Gastrocnemius medialis (tissue), 4 donors: ENCODE measurements at regions of chr2 and their contacts with region 1.

Region 1: DNA sequence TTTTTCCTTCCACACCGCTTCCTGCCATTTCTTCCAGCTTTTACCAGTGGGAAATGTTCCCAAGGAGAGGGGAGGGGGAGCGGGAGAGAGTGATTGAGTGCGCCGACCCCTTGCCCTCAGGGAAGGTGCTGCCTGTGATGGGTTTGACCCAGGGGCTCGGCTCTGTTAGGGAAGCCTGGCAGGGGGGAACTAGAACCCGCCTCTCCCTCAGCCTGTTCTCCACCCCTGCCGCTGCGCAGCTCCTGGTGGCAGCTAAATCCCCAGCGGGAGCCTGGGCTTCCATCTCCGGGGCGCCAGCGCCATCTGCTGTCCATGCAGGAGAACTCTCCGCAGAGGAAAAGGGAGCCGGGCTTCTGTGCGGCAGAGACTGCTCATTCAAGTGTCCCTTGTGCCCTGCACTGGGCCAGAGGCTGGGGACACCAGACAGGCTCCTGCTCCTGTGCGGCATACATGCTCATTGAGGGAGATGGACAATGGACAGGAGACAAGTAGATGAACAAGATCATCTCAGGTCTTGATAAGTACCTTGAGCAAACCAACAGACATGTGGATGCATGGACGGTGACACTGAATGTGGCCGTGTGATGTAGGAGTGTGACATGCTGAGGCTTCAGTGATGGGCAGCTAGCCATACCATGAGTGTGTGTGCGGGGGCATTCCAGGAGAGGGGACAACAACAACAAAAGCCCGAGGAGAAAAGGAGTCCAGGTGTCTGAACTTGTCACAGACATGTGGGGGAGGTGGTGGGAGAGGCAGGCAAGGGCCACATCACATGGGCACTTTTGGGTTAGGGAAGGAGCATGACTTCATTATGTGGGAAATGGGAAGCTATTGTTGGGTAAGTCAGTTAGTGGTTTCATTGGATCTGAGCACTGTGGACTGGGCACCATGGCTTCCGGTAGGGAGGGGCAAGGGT is 13.3 kb downstream of the CHPF start:
- DNase-seq: peak; percentile 74 to 76
- ATAC-seq: peak; percentile 91 to 96
- H3K4me3 ChIP-seq: peak overlapping the region in 1 of 4 donors; percentile 40
- H3K27ac ChIP-seq: no peak overlapping the region
- H3K4me1 ChIP-seq: no peaks in the 10 kb centered on the region
- H3K27me3 ChIP-seq: peaks cover 0 to 2% (median 0%) of the 10 kb centered on the region in 3 donors
- CTCF ChIP-seq: peak; percentile 97 to 99 (median 98)
- POLR2A ChIP-seq: no peak

Region 2: GRCh38 chr2:219171231-219171651 is 359.1 kb before region 1 on chr2:
- in situ Hi-C with region 1: no loop called
- intact Hi-C with region 1: no loop called
- DNase-seq: peak; percentile 80 to 82
- ATAC-seq: peak; percentile 82 to 88
- H3K4me3 ChIP-seq: no peak overlapping the region
- H3K27ac ChIP-seq: peak overlapping the region; percentile 68 to 84 (median 76)
- H3K4me1 ChIP-seq: peaks cover 14 to 19% of the 10 kb centered on the region in 2 donors
- H3K27me3 ChIP-seq: no peaks in the 10 kb centered on the region
- CTCF ChIP-seq: peak; percentile 51 to 78 (median 76)
- POLR2A ChIP-seq: peak; percentile 12 to 24

Region 3: GRCh38 chr2:219314804-219315468 is 215.4 kb before region 1 on chr2:
- in situ Hi-C with region 1: no loop called
- intact Hi-C with region 1: no loop called
- DNase-seq: no peak
- ATAC-seq: no peak
- H3K4me3 ChIP-seq: no peak overlapping the region
- H3K27ac ChIP-seq: no peak overlapping the region
- H3K4me1 ChIP-seq: no peaks in the 10 kb centered on the region
- H3K27me3 ChIP-seq: peaks cover 7 to 22% (median 9%) of the 10 kb centered on the region in 3 donors
- CTCF ChIP-seq: no peak
- POLR2A ChIP-seq: no peak

Region 4: GRCh38 chr2:219362524-219363164 is 167.7 kb before region 1 on chr2:
- in situ Hi-C with region 1: no loop called
- intact Hi-C with region 1: no loop called
- DNase-seq: peak; percentile 90 to 96
- ATAC-seq: peak; percentile 97 to 99
- H3K4me3 ChIP-seq: no peak overlapping the region
- H3K27ac ChIP-seq: peak overlapping the region; percentile 78 to 88 (median 80)
- H3K4me1 ChIP-seq: peaks cover 22 to 24% of the 10 kb centered on the region in 2 donors
- H3K27me3 ChIP-seq: peaks cover 12 to 19% (median 17%) of the 10 kb centered on the region in 3 donors
- CTCF ChIP-seq: no peak
- POLR2A ChIP-seq: no peak

Region 5: DNA sequence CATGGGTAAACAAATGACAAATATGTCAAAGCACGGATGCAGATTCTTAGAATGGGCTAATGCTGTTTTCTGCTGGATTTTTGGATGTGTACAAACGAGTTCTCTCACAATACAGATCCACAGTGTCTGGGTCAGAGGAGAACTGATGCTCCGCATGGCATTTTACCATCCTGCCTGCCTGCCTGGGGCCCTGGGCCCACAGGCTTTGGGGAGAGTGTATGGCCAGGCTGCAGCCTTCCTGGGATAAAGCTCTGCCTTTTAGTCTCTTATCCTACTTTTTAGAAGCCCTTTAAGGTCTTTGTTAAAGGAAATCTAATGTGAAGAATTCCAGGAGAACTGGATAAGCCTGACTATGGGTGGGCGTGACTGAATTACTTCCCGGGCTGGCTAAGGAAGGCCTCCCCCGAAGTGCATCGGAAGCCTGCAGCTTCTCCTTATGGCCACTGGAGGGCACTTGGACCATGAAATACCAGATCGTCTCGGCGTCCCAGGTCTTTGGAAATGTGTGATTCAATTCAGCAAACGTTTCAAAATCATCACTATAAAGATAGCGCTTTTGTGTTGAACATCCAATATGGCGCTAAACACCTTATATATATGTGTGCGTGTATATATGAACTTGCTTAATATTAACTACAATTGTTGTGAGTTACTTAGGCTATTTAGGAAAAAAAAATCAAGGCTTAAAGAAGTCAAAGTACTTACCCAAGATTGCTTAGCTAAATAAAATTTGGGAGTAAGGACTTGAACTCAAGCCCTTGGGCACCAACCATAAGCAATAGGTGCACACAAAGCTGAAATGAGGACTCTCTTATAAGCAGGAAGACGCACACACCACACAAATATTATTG is 127.4 kb before region 1 on chr2:
- in situ Hi-C with region 1: loop called (anchors 5 kb)
- intact Hi-C with region 1: loop called (anchors 1 kb)
- DNase-seq: peak; percentile 61 to 79
- ATAC-seq: peak; percentile 6 to 18
- H3K4me3 ChIP-seq: no peak overlapping the region
- H3K27ac ChIP-seq: peak overlapping the region; percentile 92 to 99 (median 98)
- H3K4me1 ChIP-seq: peaks cover 50 to 83% of the 10 kb centered on the region in 2 donors
- H3K27me3 ChIP-seq: no peaks in the 10 kb centered on the region
- CTCF ChIP-seq: peak; percentile 91 to 94 (median 93)
- POLR2A ChIP-seq: no peak

Region 6: GRCh38 chr2:219475697-219476651 is 54.3 kb before region 1 on chr2:
- in situ Hi-C with region 1: loop called in 2 of 4 experiments (anchors 10 kb)
- intact Hi-C with region 1: loop called (anchors 1 kb)
- DNase-seq: peak; percentile 39 to 64
- ATAC-seq: peak; percentile 62 to 79
- H3K4me3 ChIP-seq: no peak overlapping the region
- H3K27ac ChIP-seq: peak overlapping the region in 2 of 4 donors; percentile 21 to 61
- H3K4me1 ChIP-seq: no peaks in the 10 kb centered on the region
- H3K27me3 ChIP-seq: no peaks in the 10 kb centered on the region
- CTCF ChIP-seq: peak; percentile 73 to 86 (median 77)
- POLR2A ChIP-seq: no peak

Region 7: DNA sequence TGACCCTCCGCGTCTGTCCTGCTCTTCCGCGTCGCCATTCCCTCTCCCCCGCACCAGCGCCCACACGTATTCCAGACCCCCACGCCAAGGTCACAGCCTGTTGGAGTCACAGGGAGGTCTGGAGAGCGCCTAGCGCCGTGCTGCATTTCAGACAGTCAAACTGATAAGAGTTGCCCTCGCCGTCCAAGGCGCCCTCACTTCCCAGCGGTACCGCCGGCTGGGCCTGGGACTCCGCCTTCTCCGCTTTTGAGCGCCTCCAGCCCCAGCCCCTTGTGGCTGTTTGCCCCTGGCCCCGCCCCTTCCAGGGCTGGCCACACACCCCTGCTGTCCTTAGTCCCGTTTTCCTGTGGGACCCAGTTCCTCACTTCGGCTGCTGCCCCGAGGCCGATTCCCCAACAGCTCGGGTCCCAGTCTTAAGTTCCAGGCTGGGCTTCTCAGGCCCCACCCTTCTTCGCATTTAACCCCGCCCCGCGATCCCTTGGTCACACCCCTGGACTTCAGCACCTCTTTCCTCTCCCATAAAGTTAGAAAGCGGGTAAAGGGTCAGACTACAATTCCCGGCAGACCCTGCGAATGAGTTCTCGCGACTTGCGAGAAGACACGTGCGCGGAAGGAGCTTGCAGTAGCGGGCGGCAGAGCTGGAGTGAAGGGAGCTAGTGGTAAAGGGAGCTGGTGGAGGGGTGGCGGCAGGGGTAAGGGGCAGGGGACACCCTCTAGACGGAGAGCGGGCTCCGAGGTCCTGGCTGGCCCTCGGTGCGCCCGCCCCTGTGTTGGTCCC is 31.8 kb before region 1 on chr2 and contains the start of gene GMPPA:
- in situ Hi-C with region 1: loop called in 1 of 4 experiments (anchors 5 kb)
- intact Hi-C with region 1: loop called (anchors 1 kb)
- DNase-seq: peak; percentile 97 to 98
- ATAC-seq: peak; percentile 82 to 88
- H3K4me3 ChIP-seq: peak within 1 kb of the TSS; percentile 66 to 87 (median 74)
- H3K27ac ChIP-seq: peak within 1 kb of the TSS; percentile 91 to 100 (median 96)
- H3K4me1 ChIP-seq: peaks cover 39 to 46% of the 10 kb centered on the region in 2 donors
- H3K27me3 ChIP-seq: no peaks in the 10 kb centered on the region
- CTCF ChIP-seq: peak in 1 of 5 experiments; percentile 25
- POLR2A ChIP-seq: peak; percentile 83 to 89
- total RNA-seq, gene GMPPA: 18.0 to 25.8 (median 24.4) TPM

Region 8: GRCh38 chr2:219642465-219643080 is 112.3 kb after region 1 on chr2:
- in situ Hi-C with region 1: loop called in 1 of 4 experiments (anchors 10 kb)
- intact Hi-C with region 1: no loop called
- DNase-seq: peak; percentile 92 to 94
- ATAC-seq: peak; percentile 84 to 86
- H3K4me3 ChIP-seq: no peak overlapping the region
- H3K27ac ChIP-seq: no peak overlapping the region
- H3K4me1 ChIP-seq: peaks cover 27 to 40% of the 10 kb centered on the region in 2 donors
- H3K27me3 ChIP-seq: no peaks in the 10 kb centered on the region
- CTCF ChIP-seq: peak; percentile 96 to 100 (median 99)
- POLR2A ChIP-seq: no peak